ENCODE measurements at regions of chr5 and their contacts with region 1.

Region 1: GRCh38 chr5:154405078-154405792 is 40.6 kb upstream of the SAP30L start:
- DNase-seq: peak; percentile 87
- ATAC-seq: peak; percentile 99

Region 2: GRCh38 chr5:153974131-153974812 is 431.0 kb before region 1 on chr5:
- intact Hi-C with region 1: loop called (anchors 10 kb)
- DNase-seq: no peak
- ATAC-seq: peak; percentile 45

Region 3: DNA sequence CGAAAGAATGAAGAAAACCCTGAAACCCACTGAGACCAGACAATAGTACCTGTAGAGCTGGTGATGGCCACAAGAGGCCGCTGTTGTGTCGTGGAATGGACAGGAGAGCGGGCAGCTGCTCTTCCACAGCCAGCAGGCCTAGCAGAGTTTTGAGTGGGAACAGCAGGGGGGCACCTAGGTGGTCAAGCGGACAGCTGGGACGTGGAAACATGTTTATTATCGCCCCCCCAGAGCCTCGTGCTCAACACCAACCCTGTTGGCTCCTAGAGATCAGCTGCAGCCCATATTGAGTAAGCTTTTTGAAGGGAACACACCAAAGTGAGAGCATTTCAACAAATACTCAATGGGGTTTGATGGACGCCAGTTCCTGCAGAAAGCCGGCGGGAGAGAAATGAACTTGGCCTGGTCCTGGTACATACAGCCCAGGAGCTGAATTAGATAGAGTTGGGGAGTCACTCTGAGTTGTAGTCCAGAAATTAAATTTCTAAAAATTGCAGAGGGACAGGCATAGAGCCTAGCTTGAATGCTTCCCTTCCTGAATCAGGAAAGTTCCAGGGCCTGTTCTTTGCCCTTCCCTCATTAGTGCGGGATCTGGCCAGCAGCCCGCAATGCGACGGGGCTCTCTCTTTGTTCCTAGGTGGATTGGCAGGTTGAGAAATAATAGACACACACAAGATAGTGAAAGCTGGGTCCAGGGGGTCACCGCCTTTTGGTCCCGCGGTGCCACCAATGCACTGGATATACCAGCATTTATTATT is 332.6 kb before region 1 on chr5:
- intact Hi-C with region 1: loop called (anchors 5 kb)
- DNase-seq: peak; percentile 88
- ATAC-seq: peak; percentile 90

Region 4: DNA sequence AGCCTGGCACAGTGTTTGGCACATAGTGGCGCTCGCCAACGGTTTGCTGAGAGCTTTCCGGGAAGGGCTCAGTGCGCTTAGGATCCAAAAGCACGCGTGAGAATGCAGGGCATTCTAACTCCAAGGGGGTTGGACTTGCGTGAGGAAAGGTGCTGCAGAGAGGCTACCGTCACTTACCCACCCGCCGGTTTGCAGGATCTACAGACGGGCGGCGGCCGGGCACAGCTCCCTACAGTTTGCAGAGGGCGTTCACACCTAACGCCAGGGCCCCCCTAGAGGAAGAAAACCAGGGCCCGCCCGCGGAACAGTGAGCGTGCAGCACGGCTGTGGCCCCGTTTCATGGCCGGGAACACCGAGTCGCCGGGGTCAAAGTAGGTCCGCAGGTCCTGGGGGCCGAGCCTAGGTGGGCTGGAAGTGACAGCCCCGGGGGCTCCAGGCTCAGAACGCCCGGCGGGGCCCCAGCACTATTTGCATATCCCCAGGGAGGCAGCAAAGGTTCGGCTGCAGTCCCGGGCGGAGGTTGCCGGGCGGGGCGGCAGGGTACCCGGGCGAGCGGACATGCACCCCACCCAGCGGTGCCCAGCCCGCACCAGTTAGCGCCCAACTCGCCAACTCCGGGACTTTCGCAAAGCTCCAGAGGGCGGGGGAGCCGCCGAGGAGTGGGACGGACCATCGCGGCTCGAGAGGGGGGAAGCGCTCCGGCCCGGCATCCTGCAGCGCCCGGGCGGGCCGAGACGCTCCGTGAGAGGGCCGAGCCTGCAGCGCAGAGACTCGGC is 215.2 kb before region 1 on chr5:
- intact Hi-C with region 1: loop called (anchors 10 kb)
- DNase-seq: peak; percentile 92
- ATAC-seq: peak; percentile 91

Measured in left ventricle myocardium superior (tissue), 1 donor.